CD4-positive, alpha-beta T cell (primary cell): ENCODE measurements at regions of chr12 and their contacts with region 1.

Region 1: DNA sequence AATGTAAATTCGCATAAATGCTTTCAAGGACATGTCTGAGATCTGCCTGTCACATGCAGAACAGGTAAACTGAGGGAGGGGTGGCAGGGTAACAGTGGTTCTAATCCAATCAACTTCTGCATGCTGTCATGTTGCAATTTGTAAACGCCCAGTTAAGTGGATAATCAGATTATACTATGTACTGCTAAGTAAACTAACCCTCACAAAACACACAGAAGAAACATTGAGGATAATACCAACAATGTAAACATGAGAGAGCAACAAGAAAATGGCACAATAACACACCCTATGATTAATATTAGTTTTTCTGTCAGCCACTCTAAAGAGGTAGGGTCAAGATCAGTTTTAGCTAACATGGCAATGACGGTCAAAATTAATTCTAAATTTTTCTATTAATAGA is 123.7 kb downstream of the KIF21A start:
- DNase-seq: no peak
- ATAC-seq: no peak
- H3K4me3 ChIP-seq: no peak overlapping the region
- H3K4me3 Mint-ChIP-seq: no peak overlapping the region
- H3K27ac ChIP-seq: no peak overlapping the region
- H3K27ac Mint-ChIP-seq: no peak overlapping the region
- H3K4me1 ChIP-seq: no peaks in the 10 kb centered on the region
- H3K4me1 Mint-ChIP-seq: no peaks in the 10 kb centered on the region
- H3K27me3 ChIP-seq: no peaks in the 10 kb centered on the region
- H3K27me3 Mint-ChIP-seq: no peaks in the 10 kb centered on the region
- CTCF ChIP-seq: no peak

Region 2: GRCh38 chr12:38892090-38892786 is 426.9 kb before region 1 on chr12:
- CTCF ChIA-PET with region 1: no interaction called
- POLR2A ChIA-PET with region 1: no interaction called
- intact Hi-C with region 1: no loop called
- DNase-seq: no peak
- ATAC-seq: no peak
- H3K4me3 ChIP-seq: no peak overlapping the region
- H3K4me3 Mint-ChIP-seq: no peak overlapping the region
- H3K27ac ChIP-seq: no peak overlapping the region
- H3K27ac Mint-ChIP-seq: no peak overlapping the region
- H3K4me1 ChIP-seq: no peaks in the 10 kb centered on the region
- H3K4me1 Mint-ChIP-seq: no peaks in the 10 kb centered on the region
- H3K27me3 ChIP-seq: no peaks in the 10 kb centered on the region
- H3K27me3 Mint-ChIP-seq: no peaks in the 10 kb centered on the region
- CTCF ChIP-seq: no peak

Region 3: DNA sequence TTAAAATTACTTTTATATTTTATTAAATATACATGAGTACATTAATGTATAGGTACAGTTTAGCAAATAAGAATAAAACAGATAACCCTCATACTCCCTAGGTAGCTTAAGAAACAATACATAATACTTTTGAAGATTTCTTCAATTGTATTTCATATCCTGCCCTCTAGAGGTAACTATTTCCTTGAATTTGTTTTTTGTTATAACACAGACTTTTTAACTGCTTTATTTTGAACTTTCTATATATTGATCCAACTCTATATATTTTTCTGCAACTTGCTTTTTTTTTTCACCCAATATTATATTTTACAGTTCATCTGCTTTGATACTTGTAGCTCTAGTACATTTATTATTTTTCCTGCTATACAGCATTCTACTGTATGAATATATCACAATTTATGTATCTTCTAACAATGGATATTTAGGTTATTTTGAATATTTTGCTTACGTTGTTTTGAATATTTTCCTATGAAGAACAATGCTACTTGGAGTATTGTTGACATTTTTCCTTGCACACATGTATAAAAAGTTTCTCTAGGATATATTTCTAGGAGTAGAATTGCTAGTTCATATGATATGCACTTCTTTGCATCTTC is 373.2 kb after region 1 on chr12:
- CTCF ChIA-PET with region 1: no interaction called
- POLR2A ChIA-PET with region 1: no interaction called
- intact Hi-C with region 1: loop called (anchors 1 to 5 kb)
- DNase-seq: peak in 3 of 14 experiments; percentile 32 to 62 (median 33)
- ATAC-seq: peak; percentile 37
- H3K4me3 ChIP-seq: no peak overlapping the region
- H3K4me3 Mint-ChIP-seq: no peak overlapping the region
- H3K27ac ChIP-seq: no peak overlapping the region
- H3K27ac Mint-ChIP-seq: no peak overlapping the region
- H3K4me1 ChIP-seq: no peaks in the 10 kb centered on the region
- H3K4me1 Mint-ChIP-seq: peaks cover 4% of the 10 kb centered on the region
- H3K27me3 ChIP-seq: no peaks in the 10 kb centered on the region
- H3K27me3 Mint-ChIP-seq: peaks cover 11% of the 10 kb centered on the region
- CTCF ChIP-seq: peak; percentile 76

Region 4: DNA sequence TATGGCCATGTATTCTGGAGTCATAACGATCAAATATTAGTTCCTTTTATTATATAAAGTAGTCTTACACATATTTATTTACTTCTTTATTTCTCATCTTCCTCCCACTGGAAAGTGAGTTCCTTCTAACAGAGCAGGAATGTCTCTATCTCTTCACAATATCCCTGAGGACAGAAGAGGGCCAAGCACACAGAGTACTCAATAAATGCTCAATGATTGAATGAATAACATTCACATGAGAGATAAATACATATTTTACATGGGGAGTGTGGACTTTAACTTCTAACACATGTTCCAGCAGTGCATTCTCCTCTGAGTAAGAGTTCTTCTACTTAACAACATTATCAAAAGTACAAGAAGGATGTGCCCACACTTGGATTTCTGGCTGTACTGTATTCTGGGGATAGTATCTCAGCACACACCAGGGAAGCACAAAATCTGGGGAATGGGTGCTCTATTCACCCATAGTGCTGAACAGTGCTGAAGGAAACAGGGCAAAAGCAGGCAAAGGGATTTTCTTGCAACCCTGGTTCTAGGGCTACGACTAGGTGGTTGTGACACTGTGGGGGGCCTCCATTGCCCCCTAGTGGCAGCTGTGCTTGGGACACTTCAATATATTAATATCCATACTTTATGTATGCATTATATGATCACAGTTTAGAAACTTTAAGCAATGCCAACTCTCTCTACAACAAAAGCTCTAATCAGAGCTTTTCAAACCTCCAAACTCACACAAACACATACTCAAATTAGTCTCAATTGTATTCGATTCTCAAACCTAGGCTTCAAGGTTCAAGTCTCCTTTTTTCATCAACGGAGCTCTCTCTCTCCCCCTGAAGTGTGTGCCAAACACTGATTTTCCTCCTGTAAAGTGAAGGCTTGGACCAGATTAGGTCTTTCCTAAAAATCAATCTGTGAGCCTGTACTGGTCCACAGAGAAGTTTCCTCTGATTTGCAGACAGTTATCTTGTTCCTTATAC is 671.2 kb after region 1 on chr12:
- CTCF ChIA-PET with region 1: no interaction called
- POLR2A ChIA-PET with region 1: no interaction called
- intact Hi-C with region 1: loop called in 1 of 2 experiments (anchors 5 kb)
- DNase-seq: peak; percentile 28 to 67 (median 46)
- ATAC-seq: peak; percentile 64
- H3K4me3 ChIP-seq: no peak overlapping the region
- H3K4me3 Mint-ChIP-seq: no peak overlapping the region
- H3K27ac ChIP-seq: no peak overlapping the region
- H3K27ac Mint-ChIP-seq: no peak overlapping the region
- H3K4me1 ChIP-seq: no peaks in the 10 kb centered on the region
- H3K4me1 Mint-ChIP-seq: no peaks in the 10 kb centered on the region
- H3K27me3 ChIP-seq: no peaks in the 10 kb centered on the region
- H3K27me3 Mint-ChIP-seq: no peaks in the 10 kb centered on the region
- CTCF ChIP-seq: peak; percentile 87